Activated CD4-positive, alpha-beta T cell treated with anti-CD3 and anti-CD28 coated beads for 36 hours (primary cell): ENCODE measurements at regions of chr6 and their contacts with region 1.

Region 1: GRCh38 chr6:144149891-144150709 is at the start of gene STX11:
- DNase-seq: peak; percentile 91
- ATAC-seq: peak; percentile 80
- H3K4me3 Mint-ChIP-seq: peak within 1 kb of the TSS; percentile 84
- H3K27ac Mint-ChIP-seq: peak within 1 kb of the TSS; percentile 95
- H3K4me1 Mint-ChIP-seq: peaks cover 41% of the 10 kb centered on the region
- H3K27me3 Mint-ChIP-seq: peaks cover 5% of the 10 kb centered on the region
- total RNA-seq, gene STX11: 19.6 to 20.9 TPM

Region 2: DNA sequence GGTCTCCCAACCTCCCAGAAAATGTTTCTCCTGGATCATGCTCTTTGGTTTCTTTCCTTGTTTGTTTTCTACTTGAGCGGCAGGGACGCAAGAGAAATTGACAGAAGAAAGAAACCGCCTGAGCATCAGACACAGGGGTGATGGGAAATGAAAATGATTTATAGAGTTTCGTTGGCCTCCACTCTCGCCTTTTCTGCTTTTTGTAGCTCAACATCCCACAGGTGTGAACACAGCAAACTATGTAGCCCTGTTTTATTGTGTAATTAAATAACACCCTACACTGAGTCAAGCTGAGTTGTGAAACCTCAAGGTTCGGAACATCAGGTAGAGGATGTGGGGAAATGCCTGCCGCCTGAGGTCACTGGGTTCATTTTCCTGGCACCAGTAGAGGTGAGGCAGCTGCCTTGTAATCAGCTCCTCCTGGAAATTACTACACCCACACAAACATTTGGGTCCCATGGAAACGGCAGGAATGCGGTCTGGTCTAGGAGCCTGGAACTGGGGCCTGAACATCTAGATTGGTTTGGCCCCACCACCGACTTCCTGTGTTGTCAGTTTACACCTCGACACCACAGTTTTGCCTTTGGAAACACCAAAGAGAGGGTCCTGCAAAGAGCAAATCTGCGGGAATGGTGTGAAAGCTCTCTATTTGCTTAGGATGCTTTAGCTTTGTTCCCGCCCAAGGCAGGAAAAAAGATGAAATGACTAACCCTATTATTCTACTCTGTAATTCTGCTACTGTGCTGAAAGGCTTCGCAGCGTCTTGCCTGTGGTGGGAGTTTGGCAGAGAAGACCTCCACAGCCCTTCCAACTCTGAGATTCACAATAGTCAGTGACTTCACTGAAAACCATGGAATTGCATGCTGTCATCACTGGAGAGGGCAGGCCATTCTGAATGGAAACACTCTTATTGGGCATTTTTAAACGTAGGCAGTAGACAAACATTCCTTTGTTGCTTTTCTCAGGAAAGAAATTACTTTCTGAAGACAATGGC is 752.6 kb before region 1 on chr6:
- CTCF ChIA-PET with region 1: no interaction called
- POLR2A ChIA-PET with region 1: no interaction called
- intact Hi-C with region 1: no loop called
- DNase-seq: peak; percentile 41
- ATAC-seq: peak; percentile 71
- H3K4me3 Mint-ChIP-seq: no peak overlapping the region
- H3K27ac Mint-ChIP-seq: no peak overlapping the region
- H3K4me1 Mint-ChIP-seq: peaks cover 21% of the 10 kb centered on the region
- H3K27me3 Mint-ChIP-seq: peaks cover 2% of the 10 kb centered on the region

Region 3: DNA sequence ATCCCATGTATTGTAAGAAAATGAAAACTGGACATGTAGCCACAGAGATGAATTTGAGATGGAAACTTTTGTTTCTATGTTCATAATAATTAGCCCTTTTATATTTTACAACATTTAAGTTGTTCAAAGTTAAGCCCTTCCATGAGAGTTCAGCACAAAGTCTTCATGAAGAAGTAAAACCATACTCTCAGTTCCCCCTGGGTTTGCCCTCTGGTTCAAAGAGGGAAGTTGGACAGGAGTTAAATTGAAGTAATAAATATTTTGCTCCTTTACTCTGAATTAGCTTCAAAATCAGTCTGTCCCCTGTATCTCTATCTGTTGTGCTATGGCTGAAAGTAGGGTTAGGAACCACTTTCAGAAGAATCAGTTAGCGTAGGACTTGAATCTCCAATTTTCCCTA is 441.2 kb before region 1 on chr6:
- CTCF ChIA-PET with region 1: no interaction called
- POLR2A ChIA-PET with region 1: no interaction called
- intact Hi-C with region 1: no loop called
- DNase-seq: no peak
- ATAC-seq: no peak
- H3K4me3 Mint-ChIP-seq: no peak overlapping the region
- H3K27ac Mint-ChIP-seq: no peak overlapping the region
- H3K4me1 Mint-ChIP-seq: no peaks in the 10 kb centered on the region
- H3K27me3 Mint-ChIP-seq: no peaks in the 10 kb centered on the region

Region 4: GRCh38 chr6:143912671-143913070 is 237.4 kb before region 1 on chr6:
- CTCF ChIA-PET with region 1: no interaction called
- POLR2A ChIA-PET with region 1: no interaction called
- intact Hi-C with region 1: no loop called
- DNase-seq: no peak
- ATAC-seq: no peak
- H3K4me3 Mint-ChIP-seq: no peak overlapping the region
- H3K27ac Mint-ChIP-seq: no peak overlapping the region
- H3K4me1 Mint-ChIP-seq: no peaks in the 10 kb centered on the region
- H3K27me3 Mint-ChIP-seq: no peaks in the 10 kb centered on the region

Region 5: DNA sequence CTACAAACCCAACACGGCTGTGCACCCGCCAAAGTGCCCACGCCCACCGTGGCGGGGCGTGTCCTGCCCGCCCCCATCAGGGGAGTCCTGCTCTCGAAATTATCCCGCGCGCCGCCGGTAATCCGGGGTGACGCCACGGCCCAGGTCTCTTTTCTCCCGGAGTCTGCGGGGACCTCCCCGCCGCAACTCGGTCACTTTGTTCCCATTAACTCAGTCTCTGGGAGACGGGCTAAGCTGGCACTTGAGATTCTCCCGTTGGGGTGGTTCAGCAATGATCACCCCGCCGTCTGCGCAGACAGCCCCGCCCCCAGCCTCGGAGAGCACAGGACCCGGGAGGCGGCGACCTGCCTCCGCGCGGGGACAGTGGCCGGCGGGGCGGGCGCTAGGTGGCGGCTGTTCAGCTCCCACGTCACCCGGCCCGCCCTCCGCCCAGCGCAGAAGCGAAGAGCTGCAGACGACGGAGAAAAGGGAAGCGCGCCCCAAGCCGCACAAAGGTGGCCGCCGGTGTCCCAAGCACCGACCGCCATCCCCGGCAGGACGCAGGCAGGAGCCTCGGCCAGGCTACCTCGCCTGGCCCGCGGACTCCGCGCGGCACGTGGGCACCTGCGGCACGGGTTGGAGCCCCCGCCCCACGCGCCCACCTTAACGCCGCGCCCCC is 86.2 kb before region 1 on chr6:
- CTCF ChIA-PET with region 1: no interaction called
- POLR2A ChIA-PET with region 1: no interaction called
- intact Hi-C with region 1: loop called in 1 of 2 experiments (anchors 1 kb)
- DNase-seq: peak; percentile 93
- ATAC-seq: peak; percentile 90
- H3K4me3 Mint-ChIP-seq: peak overlapping the region; percentile 81
- H3K27ac Mint-ChIP-seq: peak overlapping the region; percentile 80
- H3K4me1 Mint-ChIP-seq: peaks cover 46% of the 10 kb centered on the region
- H3K27me3 Mint-ChIP-seq: peaks cover 11% of the 10 kb centered on the region

Region 6: DNA sequence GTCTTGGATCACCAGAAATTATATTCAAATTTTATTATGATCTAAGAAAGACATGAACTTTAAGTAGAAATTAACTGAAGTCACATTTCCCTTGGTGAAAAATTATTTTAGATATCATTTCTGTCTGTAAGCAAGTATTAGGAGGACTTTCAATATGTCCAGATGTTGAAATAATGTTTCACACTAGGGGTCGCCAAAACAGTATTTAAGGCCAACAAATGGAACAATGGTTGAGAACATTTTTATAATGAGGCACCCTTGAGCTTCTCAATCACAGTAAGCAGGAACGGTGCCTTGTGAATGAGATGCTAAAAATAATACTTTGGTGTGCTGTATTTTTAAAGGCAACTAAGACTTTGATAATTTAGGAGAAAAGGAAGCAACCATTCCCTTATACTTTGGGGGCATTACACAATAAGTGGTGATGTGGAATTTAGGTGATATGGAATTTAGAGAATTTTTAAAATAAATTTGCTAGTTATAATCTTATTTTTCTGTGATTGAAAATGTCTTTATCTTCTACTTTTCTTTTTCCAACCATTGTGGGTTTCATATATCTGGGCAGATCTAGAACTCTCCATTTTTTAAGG is 45.1 kb before region 1 on chr6:
- CTCF ChIA-PET with region 1: interaction called, 3 read pairs
- POLR2A ChIA-PET with region 1: no interaction called
- intact Hi-C with region 1: loop called (anchors 2 kb)
- DNase-seq: peak; percentile 30
- ATAC-seq: peak; percentile 78
- H3K4me3 Mint-ChIP-seq: no peak overlapping the region
- H3K27ac Mint-ChIP-seq: no peak overlapping the region
- H3K4me1 Mint-ChIP-seq: peaks cover 8% of the 10 kb centered on the region
- H3K27me3 Mint-ChIP-seq: no peaks in the 10 kb centered on the region

Region 7: GRCh38 chr6:144248476-144249301 is 98.6 kb after region 1 on chr6:
- CTCF ChIA-PET with region 1: no interaction called
- POLR2A ChIA-PET with region 1: no interaction called
- intact Hi-C with region 1: loop called in 1 of 2 experiments (anchors 1 kb)
- DNase-seq: peak; percentile 11
- ATAC-seq: peak; percentile 57
- H3K4me3 Mint-ChIP-seq: no peak overlapping the region
- H3K27ac Mint-ChIP-seq: peak overlapping the region; percentile 17
- H3K4me1 Mint-ChIP-seq: peaks cover 17% of the 10 kb centered on the region
- H3K27me3 Mint-ChIP-seq: peaks cover 12% of the 10 kb centered on the region

Region 8: DNA sequence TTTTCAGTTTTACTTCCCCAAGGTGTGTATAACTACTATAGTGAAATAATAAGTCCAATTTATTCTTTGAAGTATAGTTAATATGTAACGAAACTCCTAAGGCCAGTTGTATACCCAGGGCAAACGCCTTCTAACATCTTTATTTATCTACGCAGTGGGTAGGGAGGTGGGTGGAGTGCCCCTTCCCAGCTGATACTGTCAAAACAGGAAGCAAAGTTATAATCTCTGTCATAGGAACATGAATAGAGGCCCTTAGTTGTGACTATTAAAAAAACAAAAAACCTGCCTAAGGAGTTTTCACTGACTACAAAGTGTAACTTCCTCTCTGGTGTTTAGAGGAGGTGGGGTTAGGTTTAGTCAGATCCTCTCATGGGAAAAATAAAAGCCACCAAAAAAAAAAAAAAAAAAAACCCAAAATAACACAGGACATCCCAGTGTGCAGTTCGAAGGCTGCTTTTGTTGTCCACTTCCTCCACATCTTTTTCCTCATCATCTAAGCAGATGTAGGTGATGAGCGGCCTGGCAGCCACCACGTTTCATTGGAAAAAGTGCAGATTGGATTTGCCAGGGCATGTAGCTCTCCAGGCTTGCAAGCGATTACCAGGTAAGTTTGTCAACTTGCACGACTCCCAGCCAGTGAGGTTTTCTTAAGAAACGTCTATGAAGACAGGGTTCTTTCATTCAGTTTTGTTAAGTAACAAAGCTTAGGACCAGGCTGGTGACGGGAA is 193.8 kb after region 1 on chr6:
- CTCF ChIA-PET with region 1: no interaction called
- POLR2A ChIA-PET with region 1: no interaction called
- intact Hi-C with region 1: loop called in 1 of 2 experiments (anchors 1 kb)
- DNase-seq: peak; percentile 60
- ATAC-seq: peak; percentile 54
- H3K4me3 Mint-ChIP-seq: peak overlapping the region; percentile 82
- H3K27ac Mint-ChIP-seq: peak overlapping the region; percentile 98
- H3K4me1 Mint-ChIP-seq: peaks cover 72% of the 10 kb centered on the region
- H3K27me3 Mint-ChIP-seq: no peaks in the 10 kb centered on the region

Region 9: GRCh38 chr6:144566868-144567615 is 416.9 kb after region 1 on chr6:
- CTCF ChIA-PET with region 1: no interaction called
- POLR2A ChIA-PET with region 1: no interaction called
- intact Hi-C with region 1: no loop called
- DNase-seq: peak; percentile 10
- ATAC-seq: peak; percentile 77
- H3K4me3 Mint-ChIP-seq: no peak overlapping the region
- H3K27ac Mint-ChIP-seq: no peak overlapping the region
- H3K4me1 Mint-ChIP-seq: no peaks in the 10 kb centered on the region
- H3K27me3 Mint-ChIP-seq: no peaks in the 10 kb centered on the region